ENCODE measurements at regions of chr4 and their contacts with region 1.

Region 1: DNA sequence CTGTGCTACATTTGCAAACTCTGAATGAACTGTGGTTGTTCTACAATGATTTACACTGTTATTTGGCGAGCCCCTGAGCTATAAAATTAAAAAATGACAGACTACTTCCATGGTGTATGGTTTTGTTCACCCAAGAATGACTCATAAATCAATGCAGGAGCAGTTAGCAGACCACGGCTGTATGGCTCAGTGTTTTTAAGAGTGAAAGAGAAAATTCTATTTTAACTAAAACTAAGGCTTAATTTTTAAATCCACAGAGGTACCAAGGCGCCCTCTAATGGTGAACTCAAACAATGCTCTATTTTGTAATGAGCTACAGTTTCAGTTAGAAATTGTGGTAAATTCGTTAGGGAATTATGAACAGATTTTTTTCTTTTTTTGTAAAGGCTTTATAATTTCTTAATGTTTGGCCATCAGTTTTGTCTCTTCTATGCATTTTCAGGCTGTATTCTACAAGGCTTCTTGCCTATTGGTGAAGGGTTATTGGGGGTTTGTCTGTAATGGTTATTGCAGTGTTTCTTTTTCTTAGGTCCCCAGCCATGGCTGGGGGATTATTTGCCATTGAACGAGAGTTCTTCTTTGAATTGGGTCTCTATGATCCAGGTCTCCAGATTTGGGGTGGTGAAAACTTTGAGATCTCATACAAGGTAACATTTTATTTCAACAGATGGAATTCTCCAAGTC is 32.5 kb downstream of the HMGB2 start:
- DNase-seq: no peak
- H3K4me3 ChIP-seq: no peak overlapping the region
- H3K27ac ChIP-seq: no peak overlapping the region
- H3K4me1 ChIP-seq: no peaks in the 10 kb centered on the region; a peak in 1 of 7 replicates
- H3K27me3 ChIP-seq: no peaks in the 10 kb centered on the region
- CTCF ChIP-seq: peak in 2 of 3 experiments; percentile 32 to 62; a peak in 2 of 4 replicates
- EP300 ChIP-seq: no peak
- POLR2A ChIP-seq: no peak
- RAD21 ChIP-seq: peak; percentile 57 to 60

Region 2: DNA sequence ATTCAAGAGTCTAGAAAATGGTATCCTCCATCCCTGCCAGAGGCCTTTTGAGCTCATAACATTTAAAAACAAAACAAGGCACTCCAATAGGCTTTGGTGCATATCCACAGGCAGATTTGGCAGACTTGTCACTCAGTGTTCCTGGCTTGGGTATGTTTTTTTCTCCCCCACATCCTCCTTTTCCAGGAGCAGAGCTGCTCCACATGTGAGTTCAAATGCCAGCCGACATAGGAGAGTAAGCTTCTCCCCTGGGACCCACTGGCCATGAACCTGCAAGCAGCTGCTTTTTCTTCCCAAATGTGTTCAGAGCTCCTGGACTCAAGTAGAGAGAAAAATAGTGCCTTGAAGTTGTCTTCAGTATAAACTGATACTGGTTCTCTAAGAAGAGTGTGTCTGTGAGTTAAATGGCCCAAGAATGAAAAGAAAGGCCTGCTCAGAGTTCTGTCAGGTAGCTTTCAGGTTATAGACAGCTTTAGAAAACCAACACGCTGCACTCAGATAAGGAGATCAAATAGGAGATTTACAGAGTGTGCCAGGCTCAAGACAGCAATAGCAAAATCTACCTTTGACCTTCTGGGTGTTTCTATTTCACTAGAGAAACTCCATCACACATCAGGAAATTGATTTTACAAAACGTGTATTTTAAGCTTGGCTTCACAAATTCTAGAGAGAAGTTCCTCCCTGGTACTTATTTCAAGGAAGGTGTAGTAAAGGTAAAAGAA is 295.6 kb before region 1 on chr4:
- CTCF ChIA-PET with region 1: interaction called, 13 read pairs
- POLR2A ChIA-PET with region 1: no interaction called
- DNase-seq: no peak
- H3K4me3 ChIP-seq: no peak overlapping the region
- H3K27ac ChIP-seq: no peak overlapping the region
- H3K4me1 ChIP-seq: no peaks in the 10 kb centered on the region
- H3K27me3 ChIP-seq: no peaks in the 10 kb centered on the region
- CTCF ChIP-seq: no peak
- EP300 ChIP-seq: no peak
- POLR2A ChIP-seq: no peak
- RAD21 ChIP-seq: no peak

Region 3: DNA sequence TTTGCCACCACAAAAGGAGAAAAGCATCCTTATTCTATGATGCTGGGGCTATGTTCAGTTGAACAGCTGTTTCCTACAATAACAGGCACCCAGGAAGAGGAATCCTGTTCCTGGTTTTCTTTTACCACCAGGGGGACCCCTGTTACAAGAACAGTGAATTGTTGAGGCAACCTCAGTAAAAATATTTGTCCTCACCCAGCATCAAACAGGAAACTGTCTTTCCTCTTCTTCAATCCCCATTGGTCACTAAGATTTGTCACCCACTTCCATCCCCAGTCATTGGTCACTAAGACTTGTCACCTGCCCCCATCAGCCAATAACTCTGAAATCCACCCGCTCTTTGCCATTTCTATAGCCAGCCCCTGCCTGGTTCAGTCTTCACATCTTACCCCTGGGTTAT is 276.5 kb before region 1 on chr4:
- CTCF ChIA-PET with region 1: interaction called, 17 read pairs
- POLR2A ChIA-PET with region 1: no interaction called
- DNase-seq: peak; percentile 27 to 60
- H3K4me3 ChIP-seq: no peak overlapping the region
- H3K27ac ChIP-seq: no peak overlapping the region
- H3K4me1 ChIP-seq: peaks cover 2 to 8% (median 4%) of the 10 kb centered on the region in 4 experiments; a peak in 4 of 7 replicates
- H3K27me3 ChIP-seq: no peaks in the 10 kb centered on the region
- CTCF ChIP-seq: peak in 2 of 3 experiments; percentile 68 to 81; a peak in 3 of 4 replicates
- EP300 ChIP-seq: no peak
- POLR2A ChIP-seq: no peak
- RAD21 ChIP-seq: peak; percentile 94

Region 4: DNA sequence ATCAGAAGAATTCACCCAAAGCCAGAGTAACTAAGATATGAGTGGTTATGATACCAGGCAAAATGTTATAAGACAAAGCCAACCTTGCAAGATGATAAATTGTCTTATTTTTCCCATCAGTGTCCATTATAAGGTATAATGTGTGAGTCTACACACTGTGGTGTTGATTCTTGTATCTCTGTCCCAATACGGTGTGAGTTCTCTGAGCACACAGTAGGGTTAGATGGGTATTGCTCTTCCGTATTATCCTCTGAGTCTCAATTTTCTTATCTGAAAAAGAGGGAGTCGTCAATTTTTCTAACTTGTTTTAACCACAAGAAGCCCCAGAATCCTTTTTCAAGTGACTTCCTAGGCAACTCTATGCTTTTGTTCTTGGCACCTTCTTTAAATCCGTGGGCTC is 37.4 kb before region 1 on chr4:
- CTCF ChIA-PET with region 1: interaction called, 19 read pairs
- POLR2A ChIA-PET with region 1: no interaction called
- DNase-seq: no peak
- H3K4me3 ChIP-seq: no peak overlapping the region
- H3K27ac ChIP-seq: no peak overlapping the region
- H3K4me1 ChIP-seq: peaks cover 0 to 10% (median 5%) of the 10 kb centered on the region in 4 experiments; a peak in 4 of 7 replicates
- H3K27me3 ChIP-seq: no peaks in the 10 kb centered on the region; a peak in 1 of 7 replicates
- CTCF ChIP-seq: no peak
- EP300 ChIP-seq: no peak
- POLR2A ChIP-seq: no peak
- RAD21 ChIP-seq: no peak

Region 5: DNA sequence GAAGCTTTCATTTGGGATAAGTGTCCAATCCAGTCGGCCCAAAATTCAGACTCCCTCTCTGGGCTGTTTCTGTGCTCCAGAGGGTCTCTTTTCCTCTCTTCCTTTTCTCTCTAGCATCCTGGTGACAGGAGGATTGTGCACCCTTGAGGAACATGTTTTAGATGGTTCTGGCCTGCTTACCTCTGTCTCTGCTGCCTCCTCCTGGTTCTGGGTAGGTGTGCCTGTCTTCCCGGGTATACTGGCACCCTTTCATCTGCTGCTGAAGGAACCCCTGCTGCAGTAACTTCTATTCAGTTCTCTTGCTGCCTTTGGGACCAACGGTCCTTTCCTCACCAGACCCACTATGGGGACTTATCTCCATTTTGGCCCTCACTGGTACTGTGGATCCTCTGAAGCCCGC is 20.7 kb before region 1 on chr4:
- CTCF ChIA-PET with region 1: interaction called, 62 read pairs
- POLR2A ChIA-PET with region 1: no interaction called
- DNase-seq: no peak
- H3K4me3 ChIP-seq: no peak overlapping the region
- H3K27ac ChIP-seq: no peak overlapping the region
- H3K4me1 ChIP-seq: no peaks in the 10 kb centered on the region
- H3K27me3 ChIP-seq: no peaks in the 10 kb centered on the region
- CTCF ChIP-seq: peak; percentile 21 to 42 (median 36); a peak in 3 of 4 replicates
- EP300 ChIP-seq: no peak
- POLR2A ChIP-seq: no peak
- RAD21 ChIP-seq: peak; percentile 41 to 50

Region 6: GRCh38 chr4:173318648-173319211 is 17.1 kb after region 1 on chr4:
- CTCF ChIA-PET with region 1: interaction called, 38 read pairs
- POLR2A ChIA-PET with region 1: no interaction called
- DNase-seq: no peak
- H3K4me3 ChIP-seq: peak overlapping the region in 1 of 4 experiments; percentile 29; a peak in 1 of 8 replicates
- H3K27ac ChIP-seq: no peak overlapping the region
- H3K4me1 ChIP-seq: peaks cover 0 to 4% (median 3%) of the 10 kb centered on the region in 4 experiments; a peak in 4 of 7 replicates
- H3K27me3 ChIP-seq: no peaks in the 10 kb centered on the region
- CTCF ChIP-seq: no peak
- EP300 ChIP-seq: no peak
- POLR2A ChIP-seq: no peak
- RAD21 ChIP-seq: no peak

Region 7: GRCh38 chr4:173413036-173413435 is 111.4 kb after region 1 on chr4:
- CTCF ChIA-PET with region 1: interaction called, 11 read pairs
- POLR2A ChIA-PET with region 1: no interaction called
- DNase-seq: no peak
- H3K4me3 ChIP-seq: no peak overlapping the region
- H3K27ac ChIP-seq: no peak overlapping the region
- H3K4me1 ChIP-seq: no peaks in the 10 kb centered on the region
- H3K27me3 ChIP-seq: no peaks in the 10 kb centered on the region; a peak in 1 of 7 replicates
- CTCF ChIP-seq: no peak
- EP300 ChIP-seq: no peak
- POLR2A ChIP-seq: no peak
- RAD21 ChIP-seq: no peak